ENCODE measurements at regions of chr1 and their contacts with region 1.

Region 1: GRCh38 chr1:27284425-27285273 is 37.3 kb upstream of the TMEM222 start:
- DNase-seq: no peak
- H3K4me3 ChIP-seq: no peak overlapping the region
- H3K27me3 ChIP-seq: no peaks in the 10 kb centered on the region
- CTCF ChIP-seq: peak; percentile 79

Region 2: DNA sequence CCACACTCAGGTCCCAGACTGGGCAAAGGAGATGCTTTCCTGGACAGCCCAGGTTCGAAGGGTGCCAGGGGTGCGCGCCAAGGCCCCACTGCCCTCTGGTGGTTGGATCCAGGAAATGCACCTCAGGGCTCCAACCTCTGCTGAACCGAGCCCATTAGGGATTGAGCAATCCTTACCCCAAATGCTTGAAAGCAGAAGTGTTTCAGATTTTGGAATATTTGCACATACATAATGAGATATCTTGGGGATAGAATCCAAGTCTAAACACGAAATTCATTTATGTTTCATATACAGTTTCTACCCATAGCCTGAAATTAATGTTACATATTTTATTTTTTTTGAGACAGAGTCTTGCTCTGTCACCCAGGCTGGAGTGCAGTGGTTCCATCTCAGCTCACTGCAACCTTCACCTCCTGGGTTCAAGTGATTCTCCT is 187.1 kb before region 1 on chr1:
- CTCF ChIA-PET with region 1: interaction called, 164 read pairs
- POLR2A ChIA-PET with region 1: no interaction called
- DNase-seq: no peak
- H3K4me3 ChIP-seq: no peak overlapping the region
- H3K27me3 ChIP-seq: no peaks in the 10 kb centered on the region
- CTCF ChIP-seq: peak; percentile 96

Region 3: GRCh38 chr1:27142464-27142863 is 142.2 kb before region 1 on chr1:
- CTCF ChIA-PET with region 1: no interaction called
- POLR2A ChIA-PET with region 1: no interaction called
- DNase-seq: no peak
- H3K4me3 ChIP-seq: no peak overlapping the region
- H3K27me3 ChIP-seq: no peaks in the 10 kb centered on the region
- CTCF ChIP-seq: no peak

Region 4: GRCh38 chr1:27192039-27192529 is 92.6 kb before region 1 on chr1:
- CTCF ChIA-PET with region 1: interaction called, 19 read pairs
- POLR2A ChIA-PET with region 1: no interaction called
- DNase-seq: no peak
- H3K4me3 ChIP-seq: no peak overlapping the region
- H3K27me3 ChIP-seq: no peaks in the 10 kb centered on the region; the same call in 1 of the 2 replicates
- CTCF ChIP-seq: no peak

Measured in BJ (cell line).